ENCODE measurements at regions of chr3 and their contacts with region 1.

Region 1: DNA sequence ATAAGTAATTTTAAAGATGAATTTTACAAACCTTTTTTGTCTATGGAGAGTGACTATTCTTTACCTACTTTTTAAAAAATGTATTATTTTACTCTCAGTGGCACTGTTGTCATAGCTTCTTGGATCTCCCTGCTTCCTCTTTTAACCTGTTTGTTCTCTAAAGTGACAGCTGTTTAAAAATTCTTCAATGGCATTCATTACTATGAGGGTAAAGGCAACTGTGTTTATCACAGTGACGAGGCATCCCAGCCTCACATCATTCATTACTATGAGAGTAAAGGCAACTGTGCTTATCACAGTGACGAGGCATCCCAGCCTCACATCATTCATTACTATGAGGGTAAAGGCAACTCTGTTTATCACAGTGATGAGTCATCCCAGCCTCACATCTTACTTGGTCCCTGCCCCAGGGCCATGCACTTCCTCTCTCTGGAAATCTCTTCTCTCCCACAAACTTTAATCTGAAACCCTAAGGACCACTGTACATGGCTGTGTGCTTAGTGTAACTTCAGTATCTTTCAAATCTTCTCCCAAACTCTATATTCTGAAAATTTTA is 101.7 kb upstream of the ZNF717 start:
- DNase-seq: no peak
- ATAC-seq: no peak
- H3K4me3 ChIP-seq: no peak overlapping the region
- H3K27ac ChIP-seq: no peak overlapping the region
- H3K4me1 ChIP-seq: no peaks in the 10 kb centered on the region
- H3K27me3 ChIP-seq: no peaks in the 10 kb centered on the region
- CTCF ChIP-seq: no peak
- POLR2A ChIP-seq: no peak

Region 2: GRCh38 chr3:75341324-75342071 is 545.6 kb before region 1 on chr3:
- intact Hi-C with region 1: no loop called
- DNase-seq: no peak
- ATAC-seq: peak in 2 of 4 donors; percentile 41 to 62
- H3K4me3 ChIP-seq: peak overlapping the region in 2 of 12 donors; percentile 14 to 16
- H3K27ac ChIP-seq: peak overlapping the region in 1 of 12 donors; percentile 52
- H3K4me1 ChIP-seq: peaks cover 0 to 17% (median 8%) of the 10 kb centered on the region in 12 donors
- H3K27me3 ChIP-seq: no peaks in the 10 kb centered on the region
- CTCF ChIP-seq: no peak
- POLR2A ChIP-seq: no peak

Region 3: GRCh38 chr3:75951941-75952340 is 64.9 kb after region 1 on chr3:
- intact Hi-C with region 1: loop called in 1 of 10 experiments (anchors 10 kb)
- DNase-seq: no peak
- ATAC-seq: no peak
- H3K4me3 ChIP-seq: no peak overlapping the region
- H3K27ac ChIP-seq: no peak overlapping the region
- H3K4me1 ChIP-seq: no peaks in the 10 kb centered on the region
- H3K27me3 ChIP-seq: no peaks in the 10 kb centered on the region
- CTCF ChIP-seq: no peak
- POLR2A ChIP-seq: no peak

Region 4: DNA sequence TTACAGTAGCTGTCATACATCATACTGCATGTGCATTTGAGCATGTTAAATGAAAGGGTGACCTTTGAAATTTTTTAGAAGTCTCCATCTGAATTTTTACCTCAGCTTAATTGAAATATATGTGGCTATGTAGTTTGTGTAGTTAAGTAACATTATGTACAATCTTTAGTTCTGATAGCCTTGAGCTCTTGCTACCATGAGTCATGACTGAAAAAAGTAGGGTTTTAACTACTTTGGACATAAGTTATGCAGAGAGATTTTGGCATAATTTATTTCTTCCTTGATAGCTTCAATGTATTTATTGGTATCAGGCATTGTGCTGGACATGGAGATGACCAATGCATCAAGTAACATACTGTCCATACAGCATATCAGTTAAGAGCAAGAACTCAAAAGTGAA is 274.8 kb after region 1 on chr3:
- intact Hi-C with region 1: no loop called
- DNase-seq: no peak
- ATAC-seq: no peak
- H3K4me3 ChIP-seq: no peak overlapping the region
- H3K27ac ChIP-seq: no peak overlapping the region
- H3K4me1 ChIP-seq: no peaks in the 10 kb centered on the region
- H3K27me3 ChIP-seq: no peaks in the 10 kb centered on the region
- CTCF ChIP-seq: no peak
- POLR2A ChIP-seq: no peak

Measured in heart left ventricle (tissue), 16 donors.